Activated B cell treated with CpG ODN at 0.5 μM for 24 hours (primary cell): ENCODE measurements at regions of chr4 and their contacts with region 1.

Region 1: GRCh38 chr4:89836897-89837384 is at the start of gene SNCA:
- DNase-seq: no peak
- ATAC-seq: peak; percentile 57
- H3K4me3 Mint-ChIP-seq: peak within 1 kb of the TSS; percentile 74
- H3K27ac Mint-ChIP-seq: no peak within 1 kb of the TSS
- H3K4me1 Mint-ChIP-seq: peaks cover 21% of the 10 kb centered on the region
- H3K27me3 Mint-ChIP-seq: peaks cover 31% of the 10 kb centered on the region
- CTCF ChIP-seq: no peak
- total RNA-seq, gene SNCA: 1.7 and 2.2 TPM in 2 replicates

Region 2: GRCh38 chr4:89894649-89895550 is 58.0 kb after region 1 on chr4 and contains the start of gene MMRN1:
- CTCF ChIA-PET with region 1: no interaction called
- POLR2A ChIA-PET with region 1: no interaction called
- intact Hi-C with region 1: loop called (anchors 5 kb)
- DNase-seq: no peak
- ATAC-seq: no peak
- H3K4me3 Mint-ChIP-seq: peak within 1 kb of the TSS; percentile 52
- H3K27ac Mint-ChIP-seq: no peak within 1 kb of the TSS
- H3K4me1 Mint-ChIP-seq: peaks cover 15% of the 10 kb centered on the region
- H3K27me3 Mint-ChIP-seq: peaks cover 9% of the 10 kb centered on the region
- CTCF ChIP-seq: no peak
- total RNA-seq, gene MMRN1: 0.05 and 0.16 TPM in 2 replicates